Heart left ventricle (tissue), 16 donors: ENCODE measurements at regions of chr4 and their contacts with region 1.

Region 1: GRCh38 chr4:2536193-2537010 is at the start of gene FAM193A:
- DNase-seq: peak; percentile 99 to 100 (median 100)
- ATAC-seq: peak; percentile 96 to 100 (median 98)
- H3K4me3 ChIP-seq: peak within 1 kb of the TSS; percentile 71 to 99 (median 92)
- H3K27ac ChIP-seq: peak within 1 kb of the TSS; percentile 94 to 99 (median 97)
- H3K4me1 ChIP-seq: peaks cover 5 to 38% (median 26%) of the 10 kb centered on the region in 12 donors
- H3K27me3 ChIP-seq: no peaks in the 10 kb centered on the region
- CTCF ChIP-seq: peak in 3 of 12 donors; percentile 5 to 15 (median 11)
- POLR2A ChIP-seq: peak in 1 of 2 donors; percentile 73
- total RNA-seq, gene FAM193A: 12.6 to 21.0 (median 17.3) TPM

Region 2: DNA sequence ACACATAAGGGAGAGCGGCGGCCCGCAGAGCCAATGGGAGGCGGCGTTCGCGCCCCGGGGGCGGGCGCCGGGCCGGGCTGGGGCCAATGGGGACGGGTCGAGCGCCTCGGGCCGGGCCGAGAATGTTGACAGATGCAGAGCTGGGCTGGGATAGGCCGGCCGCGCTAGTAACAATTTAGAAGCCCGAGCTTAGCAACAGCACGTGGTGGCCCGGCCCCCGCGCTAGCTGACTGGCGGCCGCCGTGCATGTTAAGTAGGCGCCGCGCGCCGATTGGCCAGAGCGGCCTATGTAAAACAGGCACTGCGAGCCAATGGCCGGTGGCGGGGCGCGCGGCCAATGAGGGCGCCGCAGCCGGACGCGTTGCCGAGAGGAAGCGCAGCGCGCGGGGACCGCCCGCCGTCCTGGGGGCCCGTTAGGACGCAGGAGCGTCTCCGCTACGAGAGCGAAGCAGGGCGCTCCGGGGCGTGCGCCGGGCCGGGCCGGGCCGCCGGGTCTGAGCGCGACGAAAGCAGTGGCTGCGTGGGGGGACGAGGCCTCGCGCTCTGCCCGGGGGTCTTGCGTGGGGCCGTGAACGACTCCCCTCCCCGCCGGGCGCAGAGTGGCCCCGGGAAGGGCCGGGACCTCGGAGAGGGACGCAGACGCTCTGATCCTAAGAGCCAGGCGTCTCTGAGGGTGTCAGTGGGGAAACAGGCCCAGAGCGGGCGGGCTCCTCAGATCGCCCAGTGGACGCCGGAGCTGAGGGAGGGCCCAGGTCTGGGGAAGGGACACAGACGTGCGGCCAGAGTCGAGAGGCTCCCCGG is 274.1 kb before region 1 on chr4:
- intact Hi-C with region 1: loop called in 1 of 10 experiments (anchors 5 kb)
- DNase-seq: peak; percentile 99 to 100 (median 100)
- ATAC-seq: peak; percentile 94 to 95 (median 95)
- H3K4me3 ChIP-seq: peak overlapping the region; percentile 12 to 96 (median 86)
- H3K27ac ChIP-seq: peak overlapping the region; percentile 94 to 100 (median 98)
- H3K4me1 ChIP-seq: peaks cover 24 to 82% (median 62%) of the 10 kb centered on the region in 12 donors
- H3K27me3 ChIP-seq: no peaks in the 10 kb centered on the region
- CTCF ChIP-seq: no peak
- POLR2A ChIP-seq: peak; percentile 90 to 99

Region 3: GRCh38 chr4:2330091-2331042 is 206.0 kb before region 1 on chr4:
- intact Hi-C with region 1: no loop called
- DNase-seq: no peak
- ATAC-seq: peak in 1 of 4 donors; percentile 35
- H3K4me3 ChIP-seq: no peak overlapping the region
- H3K27ac ChIP-seq: no peak overlapping the region
- H3K4me1 ChIP-seq: no peaks in the 10 kb centered on the region
- H3K27me3 ChIP-seq: no peaks in the 10 kb centered on the region
- CTCF ChIP-seq: no peak
- POLR2A ChIP-seq: no peak

Region 4: DNA sequence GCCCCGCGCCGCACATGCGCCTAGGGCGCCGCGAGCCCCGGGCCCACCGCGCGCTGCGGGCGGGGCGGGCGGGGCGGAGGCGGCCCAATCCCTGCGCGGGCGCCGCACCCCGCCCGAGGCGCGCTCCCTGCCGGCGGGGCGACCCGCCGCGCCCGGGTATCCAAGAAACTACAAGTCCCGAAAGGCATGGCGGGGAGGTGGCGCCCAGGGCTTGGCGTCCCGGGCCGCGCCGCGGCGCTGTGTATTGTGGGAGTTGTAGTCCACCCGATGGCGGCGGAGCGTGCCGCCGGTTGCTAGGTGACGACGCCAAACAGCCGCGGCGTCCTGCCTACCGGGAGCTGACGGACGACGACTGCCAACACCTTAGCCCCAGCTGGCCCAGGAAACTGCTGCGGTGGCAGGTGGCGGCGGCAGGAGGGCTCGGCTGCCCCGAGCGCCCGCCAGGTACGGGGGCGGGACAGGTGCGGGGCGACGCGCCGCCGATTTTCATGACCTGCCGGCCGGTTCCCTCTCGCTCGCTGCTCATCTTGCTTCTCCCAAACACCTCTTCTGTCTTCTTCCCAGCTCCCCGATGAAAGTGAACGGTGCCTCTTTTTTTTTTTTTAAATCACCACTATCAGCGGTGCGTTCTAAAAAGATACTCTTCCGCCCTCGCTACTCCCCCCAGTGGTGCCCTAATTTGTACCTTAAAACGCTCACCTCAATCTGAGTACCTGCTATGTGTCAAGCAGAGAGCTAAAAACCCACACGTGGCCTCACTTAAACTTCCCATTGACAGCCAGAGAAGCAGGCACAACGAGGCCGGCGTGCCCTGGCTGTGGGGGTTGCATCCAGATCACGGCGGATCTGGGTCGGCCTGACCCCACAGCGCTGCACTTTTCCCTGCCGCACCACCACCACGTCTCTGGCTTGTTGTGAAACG is 117.5 kb before region 1 on chr4 and contains the start of gene CFAP99:
- intact Hi-C with region 1: loop called in 1 of 10 experiments (anchors 5 kb)
- DNase-seq: peak; percentile 97 to 99 (median 98)
- ATAC-seq: peak; percentile 95 to 98 (median 96)
- H3K4me3 ChIP-seq: peak within 1 kb of the TSS; percentile 48 to 84 (median 70)
- H3K27ac ChIP-seq: peak within 1 kb of the TSS in 7 of 12 donors; percentile 15 to 39 (median 24)
- H3K4me1 ChIP-seq: peaks cover 5 to 42% (median 22%) of the 10 kb centered on the region in 12 donors
- H3K27me3 ChIP-seq: peaks cover 0 to 41% (median 16%) of the 10 kb centered on the region in 9 donors
- CTCF ChIP-seq: peak in 7 of 12 donors; percentile 6 to 45 (median 23)
- POLR2A ChIP-seq: peak in 1 of 2 donors; percentile 3
- total RNA-seq, gene CFAP99: not detected

Region 5: DNA sequence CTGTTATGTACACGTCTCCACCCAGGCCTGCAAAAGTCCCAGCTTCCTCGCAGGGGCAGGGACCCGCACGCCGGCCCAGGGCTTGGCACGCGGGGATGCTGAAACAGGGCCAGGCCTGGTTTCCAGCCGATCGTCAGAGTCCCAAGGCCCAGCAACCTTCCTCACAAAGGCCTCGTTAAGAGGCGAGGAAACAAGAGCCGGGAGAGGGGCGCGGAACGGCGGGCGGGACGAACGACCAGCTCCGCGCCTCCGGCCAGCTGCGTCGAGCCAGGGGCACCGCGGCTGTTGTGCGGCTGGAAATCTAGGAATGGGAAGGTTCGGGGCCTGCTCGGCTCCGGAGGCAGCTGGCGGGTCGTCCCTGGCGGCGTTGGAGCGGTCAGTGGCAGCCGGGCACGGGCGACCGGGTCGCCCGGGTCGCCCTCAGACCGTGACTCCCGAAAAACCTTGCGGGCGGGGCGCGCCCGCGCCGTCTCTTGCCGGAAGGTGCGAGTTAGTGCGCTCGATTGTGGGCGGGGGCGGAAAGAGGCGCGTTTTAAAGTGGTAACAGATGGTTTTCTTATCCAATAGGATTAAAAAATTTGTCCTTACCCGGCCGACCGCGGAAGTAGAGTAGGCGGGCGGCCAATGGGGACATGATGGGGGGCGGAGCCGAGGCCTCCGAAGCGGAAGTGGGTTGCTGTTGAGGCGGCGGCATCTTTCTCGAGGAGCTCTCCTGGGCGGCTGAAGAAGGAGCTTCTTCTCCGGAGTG is 67.8 kb before region 1 on chr4 and contains the start of gene RNF4:
- intact Hi-C with region 1: loop called in 7 of 10 experiments (anchors 2 to 10 kb)
- DNase-seq: peak; percentile 97
- ATAC-seq: peak; percentile 95 to 97 (median 96)
- H3K4me3 ChIP-seq: peak within 1 kb of the TSS; percentile 71 to 100 (median 91)
- H3K27ac ChIP-seq: peak within 1 kb of the TSS; percentile 86 to 98 (median 94)
- H3K4me1 ChIP-seq: peaks cover 6 to 37% (median 24%) of the 10 kb centered on the region in 12 donors
- H3K27me3 ChIP-seq: no peaks in the 10 kb centered on the region
- CTCF ChIP-seq: peak in 1 of 12 donors; percentile 6
- POLR2A ChIP-seq: peak in 1 of 2 donors; percentile 66
- total RNA-seq, gene RNF4: 24.3 to 45.7 (median 30.8) TPM

Region 6: GRCh38 chr4:2484993-2485392 is 51.4 kb before region 1 on chr4:
- intact Hi-C with region 1: loop called in 1 of 10 experiments (anchors 5 kb)
- DNase-seq: peak; percentile 85 to 89 (median 87)
- ATAC-seq: peak; percentile 68 to 91 (median 84)
- H3K4me3 ChIP-seq: peak overlapping the region in 3 of 12 donors; percentile 4 to 24 (median 19)
- H3K27ac ChIP-seq: peak overlapping the region; percentile 39 to 90 (median 68)
- H3K4me1 ChIP-seq: peaks cover 20 to 95% (median 74%) of the 10 kb centered on the region in 12 donors
- H3K27me3 ChIP-seq: no peaks in the 10 kb centered on the region
- CTCF ChIP-seq: no peak
- POLR2A ChIP-seq: no peak

Region 7: DNA sequence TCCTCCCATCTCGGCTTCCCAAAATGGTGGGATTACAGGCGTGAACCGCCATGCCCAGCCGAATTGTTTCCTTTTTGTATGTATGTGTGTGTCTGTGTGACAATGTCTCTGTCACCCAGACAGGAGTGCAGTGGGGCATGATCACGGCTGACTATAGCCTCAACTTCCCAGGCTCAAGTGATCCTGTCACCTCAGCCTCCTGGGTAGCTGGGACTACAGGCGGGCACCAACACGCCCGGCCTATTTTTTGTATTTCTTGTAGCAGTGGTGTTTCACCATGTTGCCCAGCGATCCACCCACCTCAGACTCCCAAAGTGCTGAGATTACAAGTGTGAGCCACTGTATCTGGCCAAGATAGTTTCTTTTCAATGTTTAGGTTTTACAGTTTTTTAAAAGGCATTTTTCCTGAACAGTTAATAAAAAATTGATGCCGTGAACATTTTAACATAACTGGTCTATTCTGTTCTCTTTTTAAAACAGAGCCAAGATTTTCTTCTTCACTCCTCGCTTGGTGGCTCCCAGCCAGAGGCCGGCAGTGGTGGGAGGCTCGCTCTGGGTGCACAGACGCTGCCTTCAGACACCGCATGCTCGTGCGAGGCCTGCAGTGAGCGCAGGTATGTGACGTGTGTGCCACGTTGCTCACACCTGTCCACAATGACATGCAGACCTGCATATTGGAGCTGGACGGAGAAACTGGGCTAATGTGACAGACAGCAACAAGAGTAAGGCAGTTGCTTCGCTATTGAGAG is 88.6 kb after region 1 on chr4:
- intact Hi-C with region 1: loop called in 2 of 10 experiments (anchors 5 to 10 kb)
- DNase-seq: no peak
- ATAC-seq: no peak
- H3K4me3 ChIP-seq: no peak overlapping the region
- H3K27ac ChIP-seq: no peak overlapping the region
- H3K4me1 ChIP-seq: peaks cover 0 to 47% (median 8%) of the 10 kb centered on the region in 12 donors
- H3K27me3 ChIP-seq: no peaks in the 10 kb centered on the region
- CTCF ChIP-seq: no peak
- POLR2A ChIP-seq: no peak